IMR-90 (cell line): ENCODE measurements at regions of chr4 and their contacts with region 1.

Region 1: GRCh38 chr4:48269861-48270522 is 354 bp upstream of the TEC start:
- DNase-seq: peak; percentile 51
- ATAC-seq: peak; percentile 97
- H3K4me3 ChIP-seq: peak overlapping the region; percentile 97
- H3K27ac ChIP-seq: peak overlapping the region; percentile 65
- H3K4me1 ChIP-seq: no peaks in the 10 kb centered on the region
- H3K27me3 ChIP-seq: no peaks in the 10 kb centered on the region
- CTCF ChIP-seq: no peak
- POLR2A ChIP-seq: no peak
- RAD21 ChIP-seq: no peak

Region 2: GRCh38 chr4:48247142-48247877 is 22.7 kb before region 1 on chr4:
- CTCF ChIA-PET with region 1: no interaction called
- POLR2A ChIA-PET with region 1: no interaction called
- dilution Hi-C with region 1: no loop called
- in situ Hi-C with region 1: no loop called
- intact Hi-C with region 1: no loop called
- DNase-seq: peak; percentile 46
- ATAC-seq: no peak
- H3K4me3 ChIP-seq: no peak overlapping the region
- H3K27ac ChIP-seq: no peak overlapping the region
- H3K4me1 ChIP-seq: no peaks in the 10 kb centered on the region
- H3K27me3 ChIP-seq: no peaks in the 10 kb centered on the region; the same call in 1 of the 2 replicates
- CTCF ChIP-seq: no peak
- POLR2A ChIP-seq: no peak
- RAD21 ChIP-seq: no peak

Region 3: GRCh38 chr4:48308901-48309300 is 38.9 kb after region 1 on chr4:
- CTCF ChIA-PET with region 1: no interaction called
- POLR2A ChIA-PET with region 1: no interaction called
- dilution Hi-C with region 1: no loop called
- in situ Hi-C with region 1: no loop called
- intact Hi-C with region 1: loop called (anchors 1 kb)
- DNase-seq: no peak
- ATAC-seq: no peak
- H3K4me3 ChIP-seq: no peak overlapping the region
- H3K27ac ChIP-seq: no peak overlapping the region
- H3K4me1 ChIP-seq: no peaks in the 10 kb centered on the region
- H3K27me3 ChIP-seq: no peaks in the 10 kb centered on the region; the same call in 1 of the 2 replicates
- CTCF ChIP-seq: no peak
- POLR2A ChIP-seq: no peak
- RAD21 ChIP-seq: no peak

Region 4: GRCh38 chr4:48431401-48431800 is 161.4 kb after region 1 on chr4:
- CTCF ChIA-PET with region 1: no interaction called
- POLR2A ChIA-PET with region 1: no interaction called
- dilution Hi-C with region 1: no loop called
- in situ Hi-C with region 1: no loop called
- intact Hi-C with region 1: no loop called
- DNase-seq: no peak
- ATAC-seq: no peak
- H3K4me3 ChIP-seq: no peak overlapping the region
- H3K27ac ChIP-seq: no peak overlapping the region
- H3K4me1 ChIP-seq: peaks cover 1% of the 10 kb centered on the region; the same call in 1 of the 2 replicates
- H3K27me3 ChIP-seq: no peaks in the 10 kb centered on the region
- CTCF ChIP-seq: no peak
- POLR2A ChIP-seq: no peak
- RAD21 ChIP-seq: no peak

Region 5: DNA sequence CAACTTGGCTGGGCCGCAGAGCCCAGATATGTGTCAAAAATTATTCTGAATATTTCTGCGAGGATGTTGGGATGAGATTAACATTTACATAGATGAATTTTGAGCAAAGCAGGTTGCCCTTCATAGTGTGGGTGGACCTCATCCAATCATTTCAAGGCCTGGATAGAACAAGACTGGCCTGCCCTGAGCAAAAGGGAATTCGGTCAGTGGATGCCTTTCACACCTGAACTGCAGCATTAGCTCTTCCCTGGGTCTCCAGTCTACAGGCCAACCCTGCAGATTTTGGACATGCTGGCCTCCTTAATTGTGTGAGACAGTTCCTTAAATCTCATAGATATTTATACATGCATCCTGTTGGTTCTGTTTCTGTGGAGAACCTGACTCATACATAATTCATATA is 180.7 kb after region 1 on chr4:
- CTCF ChIA-PET with region 1: no interaction called
- POLR2A ChIA-PET with region 1: no interaction called
- dilution Hi-C with region 1: no loop called
- in situ Hi-C with region 1: no loop called
- intact Hi-C with region 1: no loop called
- DNase-seq: no peak
- ATAC-seq: no peak
- H3K4me3 ChIP-seq: no peak overlapping the region
- H3K27ac ChIP-seq: no peak overlapping the region
- H3K4me1 ChIP-seq: no peaks in the 10 kb centered on the region
- H3K27me3 ChIP-seq: peaks cover 5% of the 10 kb centered on the region
- CTCF ChIP-seq: no peak
- POLR2A ChIP-seq: no peak
- RAD21 ChIP-seq: no peak